Heart right ventricle (tissue), 16 donors: ENCODE measurements at regions of chr2 and their contacts with region 1.

Region 1: GRCh38 chr2:43905371-43905803 is 66.6 kb downstream of the ABCG8 start:
- DNase-seq: no peak
- ATAC-seq: no peak
- H3K4me3 ChIP-seq: no peak overlapping the region
- H3K27ac ChIP-seq: no peak overlapping the region
- H3K4me1 ChIP-seq: no peaks in the 10 kb centered on the region
- H3K27me3 ChIP-seq: no peaks in the 10 kb centered on the region
- CTCF ChIP-seq: no peak

Region 2: GRCh38 chr2:43977677-43978375 is 72.4 kb after region 1 on chr2:
- intact Hi-C with region 1: loop called in 1 of 10 experiments (anchors 10 kb)
- DNase-seq: no peak
- ATAC-seq: no peak
- H3K4me3 ChIP-seq: no peak overlapping the region
- H3K27ac ChIP-seq: no peak overlapping the region
- H3K4me1 ChIP-seq: peaks cover 0 to 2% (median 0%) of the 10 kb centered on the region in 9 donors
- H3K27me3 ChIP-seq: no peaks in the 10 kb centered on the region
- CTCF ChIP-seq: no peak